HEK293 (cell line): ENCODE measurements at regions of chr10 and their contacts with region 1.

Region 1: DNA sequence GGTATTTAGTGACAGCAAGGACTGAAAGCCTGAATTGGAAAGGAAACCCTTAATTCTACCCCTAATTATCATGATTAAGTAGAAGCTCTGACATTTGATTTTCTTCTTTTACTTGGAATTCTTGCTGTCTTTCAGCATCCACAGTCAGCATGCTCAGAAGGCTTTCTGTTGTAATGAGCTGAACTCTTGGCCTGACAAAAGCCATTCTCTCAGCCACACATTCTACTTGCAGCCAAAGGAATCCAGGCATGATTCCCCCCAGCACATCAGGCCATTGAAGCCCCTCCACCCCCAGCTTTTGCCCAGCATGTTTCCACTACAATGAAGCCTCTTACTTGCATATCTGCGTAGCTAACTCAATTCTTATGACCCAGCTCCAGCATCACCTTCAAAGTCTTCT is 94.3 kb upstream of the FRMD4A start:
- H3K4me3 ChIP-seq: no peak overlapping the region
- H3K27ac ChIP-seq: no peak overlapping the region
- H3K4me1 ChIP-seq: no peaks in the 10 kb centered on the region
- CTCF ChIP-seq: no peak

Region 2: DNA sequence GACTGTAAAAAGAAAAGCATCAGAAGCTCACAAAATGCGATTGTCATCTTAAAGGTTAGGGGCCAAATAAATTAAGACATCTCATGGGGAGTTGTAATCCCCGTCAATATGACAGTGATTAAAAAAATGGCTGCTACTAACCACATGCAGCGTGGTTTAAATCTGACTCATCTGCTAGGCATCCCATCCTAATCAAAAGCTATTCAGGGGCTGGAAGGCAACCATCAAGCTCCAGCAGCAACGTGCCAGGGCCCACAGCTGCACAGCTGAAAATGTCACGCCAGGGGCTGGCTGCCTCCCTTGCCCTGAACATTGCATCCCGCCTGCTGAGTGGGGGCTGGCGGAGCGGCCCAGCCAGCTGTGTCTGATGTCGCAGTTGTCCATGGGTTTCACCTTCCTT is 28.0 kb before region 1 on chr10:
- CTCF ChIA-PET with region 1: no interaction called
- POLR2A ChIA-PET with region 1: interaction called, 11 read pairs
- H3K4me3 ChIP-seq: no peak overlapping the region
- H3K27ac ChIP-seq: no peak overlapping the region
- H3K4me1 ChIP-seq: no peaks in the 10 kb centered on the region
- CTCF ChIP-seq: no peak